Aorta (tissue), 5 donors: ENCODE measurements at regions of chr1 and their contacts with region 1.

Region 1: GRCh38 chr1:15847100-15847892 is at the start of gene SPEN:
- DNase-seq: peak; percentile 99
- ATAC-seq: peak; percentile 95
- H3K4me3 ChIP-seq: peak within 1 kb of the TSS; percentile 72 to 85
- H3K27ac ChIP-seq: peak within 1 kb of the TSS; percentile 90 to 93
- H3K4me1 ChIP-seq: no peaks in the 10 kb centered on the region
- H3K27me3 ChIP-seq: no peaks in the 10 kb centered on the region
- total RNA-seq, gene SPEN: 76.9 to 102 TPM

Region 2: DNA sequence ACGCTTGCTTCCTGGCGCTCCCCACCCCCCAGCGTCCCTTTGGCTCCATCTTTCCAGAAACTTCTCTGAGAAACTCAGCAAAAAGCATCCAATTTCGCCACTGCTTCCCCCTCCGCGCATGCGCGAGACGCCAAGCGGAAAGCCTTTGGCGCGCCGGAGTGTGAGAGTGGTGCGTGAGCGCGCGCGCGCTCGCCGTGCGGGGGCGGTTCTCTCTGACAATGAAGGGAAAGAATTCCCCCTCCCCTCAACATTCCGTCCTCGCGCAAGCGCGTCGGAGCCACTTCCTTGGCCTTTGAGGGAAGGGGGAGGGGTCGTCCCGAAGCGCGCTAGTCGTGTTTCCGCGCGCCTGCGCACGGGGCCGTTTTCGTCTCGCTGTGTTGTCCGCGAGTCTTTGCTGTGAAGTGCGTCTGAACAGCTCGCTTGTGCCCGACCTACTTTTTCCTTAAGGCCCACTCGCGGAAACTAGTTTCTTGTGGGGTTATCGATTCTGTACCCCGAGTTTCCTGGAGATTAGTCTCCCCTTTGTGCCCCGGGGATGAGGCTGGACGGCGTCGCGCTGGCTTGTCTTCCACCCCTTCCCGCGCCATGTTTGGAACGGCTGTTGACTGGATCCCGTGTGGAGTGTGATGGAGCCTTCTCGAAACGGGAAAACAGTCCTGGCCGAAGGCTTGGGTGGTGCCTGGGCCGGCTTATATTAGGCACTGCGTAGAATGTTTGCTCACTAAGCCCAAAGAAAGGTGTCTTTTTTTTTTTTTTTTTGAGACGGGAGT is 11.4 kb before region 1 on chr1:
- intact Hi-C with region 1: loop called in 1 of 2 experiments (anchors 2 kb)
- DNase-seq: peak; percentile 100
- ATAC-seq: peak; percentile 95
- H3K4me3 ChIP-seq: peak overlapping the region; percentile 76 to 85
- H3K27ac ChIP-seq: peak overlapping the region; percentile 93 to 98
- H3K4me1 ChIP-seq: no peaks in the 10 kb centered on the region
- H3K27me3 ChIP-seq: no peaks in the 10 kb centered on the region

Region 3: GRCh38 chr1:15885701-15886610 is 38.7 kb after region 1 on chr1:
- intact Hi-C with region 1: loop called (anchors 5 kb)
- DNase-seq: peak; percentile 99
- ATAC-seq: peak; percentile 97
- H3K4me3 ChIP-seq: peak overlapping the region; percentile 30 to 36
- H3K27ac ChIP-seq: peak overlapping the region; percentile 68 to 99
- H3K4me1 ChIP-seq: peaks cover 5% of the 10 kb centered on the region in 2 donors
- H3K27me3 ChIP-seq: no peaks in the 10 kb centered on the region

Region 4: DNA sequence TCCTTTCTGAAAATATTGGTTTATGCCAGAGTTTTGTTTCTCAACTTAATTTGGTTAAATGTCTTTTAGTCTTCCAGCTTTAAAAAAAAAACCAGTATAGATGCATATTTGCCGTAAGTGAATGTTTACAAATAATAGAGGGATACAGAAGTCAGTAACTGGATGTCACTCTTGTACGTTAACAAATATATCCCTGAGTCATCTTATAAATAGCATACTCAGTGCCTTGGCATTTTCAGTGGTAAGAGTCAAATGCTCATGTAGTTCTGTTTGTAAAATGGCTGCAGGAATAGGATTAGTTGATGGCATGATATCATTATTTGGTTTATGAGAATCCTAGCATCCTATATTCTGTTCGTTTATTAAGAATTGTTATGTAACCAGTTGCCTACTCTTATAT is 55.6 kb after region 1 on chr1:
- intact Hi-C with region 1: loop called in 1 of 2 experiments (anchors 10 kb)
- DNase-seq: no peak
- ATAC-seq: no peak
- H3K4me3 ChIP-seq: no peak overlapping the region
- H3K27ac ChIP-seq: no peak overlapping the region
- H3K4me1 ChIP-seq: peaks cover 0 to 1% of the 10 kb centered on the region in 2 donors
- H3K27me3 ChIP-seq: no peaks in the 10 kb centered on the region